Mucosa of descending colon (tissue), 3 donors: ENCODE measurements at regions of chr19 and their contacts with region 1.

Region 1: DNA sequence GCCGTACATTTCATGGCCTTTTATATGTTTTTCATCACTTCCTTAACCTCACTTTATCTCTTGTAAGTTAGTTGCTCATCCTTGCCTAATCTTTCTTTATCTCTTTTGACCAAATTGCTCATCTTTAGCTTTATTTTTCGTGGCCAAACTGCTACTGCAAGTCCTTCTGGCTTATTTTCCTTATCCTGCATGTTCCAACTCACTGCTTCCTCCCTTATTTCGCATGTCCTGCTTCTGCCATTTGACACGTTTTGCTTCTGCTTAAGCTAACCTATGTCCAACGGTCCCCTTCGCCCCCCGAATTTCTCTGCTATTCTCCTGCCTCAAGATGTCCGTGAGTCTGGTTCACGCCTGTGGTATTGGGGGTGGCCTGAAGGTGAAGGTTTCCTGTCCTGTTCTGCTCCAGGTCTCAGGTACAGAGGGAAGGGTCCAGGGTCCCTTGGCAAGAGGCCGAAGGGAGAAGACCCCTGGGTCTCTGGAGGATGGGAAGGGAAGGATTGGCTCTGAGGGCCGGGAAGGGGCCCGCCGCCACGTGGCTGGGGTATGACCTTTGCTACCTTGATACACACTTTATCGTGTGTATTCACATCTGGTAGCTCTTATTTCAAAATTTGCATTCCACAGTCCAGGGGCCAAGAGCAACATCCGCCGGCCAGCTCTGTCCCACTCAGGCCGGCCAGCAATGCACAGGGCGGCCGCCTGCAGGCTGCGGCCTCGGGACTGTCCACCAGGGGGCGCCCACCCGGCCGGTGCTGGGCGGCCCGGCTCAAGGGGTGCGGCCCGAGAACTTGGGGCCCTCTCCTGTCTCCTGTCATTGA is 2.9 kb upstream of the C19orf85 start:
- DNase-seq: peak; percentile 67 to 83 (median 76)
- ATAC-seq: peak; percentile 91
- H3K4me3 ChIP-seq: no peak overlapping the region
- H3K4me1 ChIP-seq: peaks cover 6% of the 10 kb centered on the region
- CTCF ChIP-seq: peak; percentile 97

Region 2: GRCh38 chr19:55503502-55504251 is 36.2 kb after region 1 on chr19:
- intact Hi-C with region 1: loop called in 1 of 2 experiments (anchors 2 kb)
- DNase-seq: peak; percentile 92 to 93 (median 92)
- ATAC-seq: peak; percentile 98
- H3K4me3 ChIP-seq: no peak overlapping the region
- H3K4me1 ChIP-seq: no peaks in the 10 kb centered on the region
- CTCF ChIP-seq: peak; percentile 98

Region 3: GRCh38 chr19:55563261-55563690 is 95.8 kb after region 1 on chr19:
- intact Hi-C with region 1: no loop called
- DNase-seq: peak in 1 of 3 donors; percentile 28
- ATAC-seq: peak; percentile 68
- H3K4me3 ChIP-seq: no peak overlapping the region
- H3K4me1 ChIP-seq: peaks cover 3% of the 10 kb centered on the region
- CTCF ChIP-seq: no peak